GM13976 (cell line): ENCODE measurements at regions of chr6 and their contacts with region 1.

Region 1: GRCh38 chr6:159193923-159194322 is 24.7 kb downstream of the FNDC1 start:
- DNase-seq: no peak
- CTCF ChIP-seq: no peak

Region 2: DNA sequence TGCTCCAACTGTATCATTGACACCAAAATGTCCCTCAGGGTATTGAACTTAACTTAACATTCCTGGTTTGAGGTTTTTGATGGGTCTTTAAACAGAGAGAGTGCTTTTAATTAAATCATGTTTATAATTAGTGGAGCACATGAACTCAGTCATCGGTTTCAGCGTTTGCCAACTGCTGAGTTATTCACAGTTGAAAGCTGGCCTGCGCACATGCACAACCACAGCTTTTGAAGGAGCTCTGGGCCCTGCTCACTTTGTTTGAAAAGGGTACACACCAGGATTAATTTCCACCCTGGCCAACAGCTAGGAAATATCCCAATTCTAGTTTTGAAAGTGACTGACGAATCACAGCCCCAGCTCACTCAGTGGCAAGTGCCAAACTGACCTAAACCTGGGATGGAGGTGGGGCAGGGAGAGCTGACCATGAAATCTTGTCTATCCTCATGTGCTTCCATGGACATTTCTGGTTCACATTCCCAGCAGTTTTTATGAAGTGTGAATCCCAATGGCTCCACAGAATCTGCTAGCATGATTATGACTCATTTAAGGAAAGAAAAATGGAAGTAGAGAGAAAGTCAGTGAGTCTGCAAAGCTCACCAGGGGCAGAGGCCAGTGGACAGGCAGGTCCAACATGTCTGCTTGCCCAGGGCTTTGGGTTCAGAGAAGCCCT is 223.1 kb after region 1 on chr6:
- in situ Hi-C with region 1: no loop called
- DNase-seq: no peak
- CTCF ChIP-seq: no peak

Region 3: GRCh38 chr6:159434410-159434809 is 240.5 kb after region 1 on chr6:
- in situ Hi-C with region 1: no loop called
- DNase-seq: no peak
- CTCF ChIP-seq: no peak

Region 4: GRCh38 chr6:159608961-159609651 is 415.2 kb after region 1 on chr6:
- in situ Hi-C with region 1: loop called (anchors 25 kb)
- DNase-seq: peak; percentile 65
- CTCF ChIP-seq: peak; percentile 78

Region 5: DNA sequence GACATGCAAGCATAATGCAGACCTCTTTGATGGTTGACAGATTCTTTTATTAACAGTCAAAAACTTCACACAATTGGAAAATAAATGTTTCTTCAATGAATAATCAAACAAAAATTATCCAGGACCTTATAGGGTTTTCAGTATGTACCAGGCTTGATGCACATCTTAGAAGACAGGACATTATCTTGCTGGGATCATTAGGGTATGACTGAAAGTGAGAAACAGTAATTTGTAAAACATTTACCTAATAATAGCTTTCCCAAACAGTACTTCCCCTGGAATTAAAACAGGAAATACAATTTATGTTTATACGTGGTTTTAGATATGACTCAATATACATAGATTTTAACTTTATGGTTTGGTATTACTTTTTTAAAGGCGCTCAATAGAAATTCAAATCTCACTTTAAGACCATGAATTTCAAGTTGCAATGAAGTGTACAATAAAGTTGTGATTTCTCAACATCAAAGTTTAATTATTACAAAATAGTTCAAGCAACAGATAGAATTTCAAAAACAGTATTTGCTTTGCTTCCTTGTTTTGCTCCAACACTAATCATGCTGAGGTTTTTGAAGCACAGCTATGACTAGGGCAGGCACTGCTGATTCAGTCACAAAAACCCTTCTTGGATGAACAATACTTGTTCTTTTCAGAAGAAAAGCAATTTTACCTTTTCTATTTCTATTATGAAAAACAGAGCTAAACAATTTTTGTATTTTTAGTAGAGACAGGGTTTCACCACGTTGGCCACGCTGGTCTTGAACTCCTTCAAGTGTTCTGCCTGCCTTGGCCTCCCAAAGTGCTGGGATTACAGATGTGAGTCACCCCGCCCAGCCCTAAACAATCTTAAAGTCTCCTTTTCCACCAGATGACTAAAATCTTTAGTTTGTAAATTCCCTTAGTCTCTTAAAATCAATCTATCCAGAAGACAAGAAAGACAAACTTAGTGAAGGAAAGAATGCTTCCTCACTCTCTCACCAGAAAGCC is 485.5 kb after region 1 on chr6:
- in situ Hi-C with region 1: no loop called
- DNase-seq: no peak
- CTCF ChIP-seq: no peak